ENCODE measurements at regions of chr1 and their contacts with region 1.

Region 1: GRCh38 chr1:170885551-170885950 is 49.8 kb upstream of the MROH9 start:
- DNase-seq: no peak
- H3K4me3 ChIP-seq: no peak overlapping the region
- H3K27ac ChIP-seq: no peak overlapping the region
- H3K4me1 ChIP-seq: no peaks in the 10 kb centered on the region
- H3K27me3 ChIP-seq: no peaks in the 10 kb centered on the region
- CTCF ChIP-seq: no peak
- POLR2A ChIP-seq: no peak

Region 2: DNA sequence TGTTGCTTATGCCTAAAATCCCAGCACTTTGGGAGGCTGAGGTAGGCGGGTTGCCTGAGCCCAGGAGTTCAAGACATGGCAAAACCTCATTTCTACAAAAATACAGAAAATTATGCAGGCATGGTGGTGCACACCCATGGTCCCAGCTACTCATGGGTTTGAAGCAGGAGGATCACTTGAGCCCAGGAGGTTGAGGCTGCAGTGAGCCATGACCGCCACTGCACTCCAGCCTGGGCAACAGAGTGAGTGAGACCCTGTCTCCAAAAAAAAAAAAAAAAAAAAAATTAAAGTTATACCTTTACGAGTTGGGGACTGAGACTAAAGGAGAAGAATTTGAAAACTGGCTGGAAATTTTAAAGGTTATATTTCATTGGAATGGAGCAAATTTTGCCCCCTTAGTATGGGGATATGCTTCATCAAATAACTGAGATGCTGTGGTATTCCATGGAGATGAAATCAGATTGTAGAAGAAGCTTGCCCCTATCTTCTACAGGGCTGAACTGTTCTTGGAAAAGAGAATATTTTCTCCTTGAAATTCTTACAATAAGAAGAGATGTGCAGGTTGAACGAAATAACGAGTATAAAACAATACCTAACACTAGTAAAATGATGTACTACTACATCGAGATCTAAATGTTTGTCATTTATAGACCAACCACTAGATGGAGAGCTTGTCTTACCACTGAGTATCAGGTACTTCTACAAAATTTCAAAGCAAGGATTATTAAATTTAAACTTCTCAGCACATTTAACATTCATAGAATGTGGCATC is 956.9 kb before region 1 on chr1:
- intact Hi-C with region 1: loop called (anchors 5 kb)
- DNase-seq: no peak
- H3K4me3 ChIP-seq: no peak overlapping the region
- H3K27ac ChIP-seq: no peak overlapping the region
- H3K4me1 ChIP-seq: no peaks in the 10 kb centered on the region
- H3K27me3 ChIP-seq: no peaks in the 10 kb centered on the region
- CTCF ChIP-seq: peak in 3 of 4 experiments; percentile 57 to 77 (median 77)
- POLR2A ChIP-seq: no peak

Region 3: GRCh38 chr1:170765712-170766330 is 119.7 kb before region 1 on chr1:
- intact Hi-C with region 1: no loop called
- DNase-seq: no peak
- H3K4me3 ChIP-seq: no peak overlapping the region
- H3K27ac ChIP-seq: no peak overlapping the region
- H3K4me1 ChIP-seq: no peaks in the 10 kb centered on the region
- H3K27me3 ChIP-seq: no peaks in the 10 kb centered on the region
- CTCF ChIP-seq: peak in 3 of 4 experiments; percentile 9 to 52 (median 46)
- POLR2A ChIP-seq: no peak

Region 4: DNA sequence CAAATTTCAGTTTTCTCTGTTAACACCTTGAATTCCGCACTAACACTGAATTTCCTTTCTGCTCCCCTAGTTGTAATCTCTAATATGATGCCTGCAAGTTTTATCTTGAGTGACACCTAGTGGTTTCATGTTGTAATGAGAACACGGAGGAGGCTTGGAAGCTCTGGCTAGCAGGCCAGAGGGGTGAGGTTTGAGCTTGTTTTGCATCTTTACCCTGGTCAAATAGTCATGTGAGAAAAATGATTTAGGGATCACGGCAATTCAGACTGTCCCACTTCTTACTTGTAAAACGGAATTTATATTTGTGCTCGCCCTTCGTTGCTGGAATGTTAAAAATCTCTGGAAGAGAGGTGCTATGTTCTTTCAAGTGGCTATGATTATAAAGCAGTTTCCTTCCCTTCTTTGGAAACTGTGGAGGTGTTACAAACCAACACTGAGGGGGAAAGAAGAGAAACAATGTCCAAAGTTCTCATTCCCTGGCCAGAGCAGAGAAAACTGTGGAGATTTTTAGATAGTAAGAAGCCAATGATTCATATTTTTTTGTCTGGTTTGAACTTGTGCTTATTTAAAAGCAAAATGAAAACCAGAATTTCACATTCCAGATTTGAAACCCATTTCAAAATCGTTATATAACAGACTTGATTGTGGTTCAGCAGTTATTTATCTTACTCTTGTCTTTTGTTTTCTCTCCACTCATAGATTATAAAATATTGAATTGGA is 44.4 kb after region 1 on chr1:
- intact Hi-C with region 1: no loop called
- DNase-seq: peak; percentile 21
- H3K4me3 ChIP-seq: no peak overlapping the region
- H3K27ac ChIP-seq: peak overlapping the region; percentile 38 to 40
- H3K4me1 ChIP-seq: no peaks in the 10 kb centered on the region
- H3K27me3 ChIP-seq: no peaks in the 10 kb centered on the region
- CTCF ChIP-seq: peak in 3 of 4 experiments; percentile 49 to 65 (median 59)
- POLR2A ChIP-seq: no peak

Measured in prostate gland (tissue), 2 donors.